SK-N-SH (cell line): ENCODE measurements at regions of chr13 and their contacts with region 1.

Region 1: GRCh38 chr13:108155185-108156106 is 59.9 kb downstream of the LIG4 start:
- DNase-seq: peak; percentile 55
- H3K4me3 ChIP-seq: peak overlapping the region in 1 of 2 experiments; percentile 48; a peak in 1 of 4 replicates
- H3K27ac ChIP-seq: no peak overlapping the region
- H3K4me1 ChIP-seq: no peaks in the 10 kb centered on the region
- H3K27me3 ChIP-seq: no peaks in the 10 kb centered on the region
- CTCF ChIP-seq: peak; percentile 95
- EP300 ChIP-seq: no peak
- RAD21 ChIP-seq: peak; percentile 87

Region 2: GRCh38 chr13:107205303-107206104 is 949.9 kb before region 1 on chr13:
- CTCF ChIA-PET with region 1: interaction called, 44 read pairs
- POLR2A ChIA-PET with region 1: no interaction called
- DNase-seq: peak; percentile 71
- H3K4me3 ChIP-seq: peak overlapping the region in 1 of 2 experiments; percentile 10; a peak in 1 of 4 replicates
- H3K27ac ChIP-seq: no peak overlapping the region
- H3K4me1 ChIP-seq: peaks cover 3 to 11% of the 10 kb centered on the region in 2 experiments; a peak in 3 of 4 replicates
- H3K27me3 ChIP-seq: no peaks in the 10 kb centered on the region
- CTCF ChIP-seq: peak; percentile 99
- EP300 ChIP-seq: no peak
- RAD21 ChIP-seq: peak; percentile 90

Region 3: DNA sequence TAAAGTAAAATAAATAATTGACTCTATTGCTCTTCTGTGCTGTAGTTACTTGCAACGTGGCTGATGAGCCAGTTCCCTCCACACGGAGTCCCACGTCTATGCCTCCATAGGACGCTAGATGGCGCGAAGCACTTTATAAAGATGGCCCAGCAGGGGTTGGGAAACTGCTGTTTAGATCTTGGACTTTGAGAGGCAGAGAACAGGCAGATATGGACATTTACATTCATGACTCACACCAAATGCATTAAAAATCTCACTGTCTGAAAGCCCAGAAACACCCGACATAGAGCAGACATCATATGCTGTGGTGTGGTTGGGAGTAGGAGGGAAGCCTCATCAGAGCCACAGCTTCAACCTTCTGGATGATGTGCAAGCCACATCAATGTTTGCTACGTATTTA is 944.4 kb before region 1 on chr13:
- CTCF ChIA-PET with region 1: interaction called, 44 read pairs
- POLR2A ChIA-PET with region 1: no interaction called
- DNase-seq: peak; percentile 70
- H3K4me3 ChIP-seq: peak overlapping the region in 1 of 2 experiments; percentile 11; a peak in 1 of 4 replicates
- H3K27ac ChIP-seq: no peak overlapping the region; a peak in 1 of 4 replicates
- H3K4me1 ChIP-seq: peaks cover 11 to 17% of the 10 kb centered on the region in 2 experiments; a peak in 3 of 4 replicates
- H3K27me3 ChIP-seq: no peaks in the 10 kb centered on the region
- CTCF ChIP-seq: peak; percentile 96
- EP300 ChIP-seq: 0 out of 4 replicates have a peak, but pooled peaks of 1 of the 2 experiments have one; percentile 21
- RAD21 ChIP-seq: peak; percentile 98

Region 4: DNA sequence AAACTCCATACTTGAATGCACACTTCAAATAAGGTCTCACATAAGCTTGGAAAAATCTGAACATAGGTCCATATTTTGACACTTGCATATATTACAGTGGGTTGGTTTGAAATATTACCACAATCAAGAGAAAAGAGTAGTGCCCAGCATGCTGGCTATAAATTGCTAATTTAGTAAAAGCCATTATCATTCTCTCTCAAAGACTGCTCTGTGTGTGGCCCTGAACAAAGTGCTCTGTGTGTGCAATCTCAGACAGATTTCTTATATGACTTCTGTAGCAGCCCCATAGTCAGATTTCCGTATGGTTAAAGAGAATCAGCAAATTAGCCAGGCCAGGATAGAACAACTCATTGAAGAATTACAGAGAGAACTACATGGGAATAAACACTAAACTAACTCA is 18.3 kb before region 1 on chr13:
- CTCF ChIA-PET with region 1: interaction called, 16 read pairs
- POLR2A ChIA-PET with region 1: no interaction called
- DNase-seq: no peak
- H3K4me3 ChIP-seq: no peak overlapping the region
- H3K27ac ChIP-seq: no peak overlapping the region
- H3K4me1 ChIP-seq: no peaks in the 10 kb centered on the region
- H3K27me3 ChIP-seq: peaks cover 1% of the 10 kb centered on the region; the same call in 1 of the 2 replicates
- CTCF ChIP-seq: no peak
- EP300 ChIP-seq: no peak
- RAD21 ChIP-seq: no peak

Region 5: DNA sequence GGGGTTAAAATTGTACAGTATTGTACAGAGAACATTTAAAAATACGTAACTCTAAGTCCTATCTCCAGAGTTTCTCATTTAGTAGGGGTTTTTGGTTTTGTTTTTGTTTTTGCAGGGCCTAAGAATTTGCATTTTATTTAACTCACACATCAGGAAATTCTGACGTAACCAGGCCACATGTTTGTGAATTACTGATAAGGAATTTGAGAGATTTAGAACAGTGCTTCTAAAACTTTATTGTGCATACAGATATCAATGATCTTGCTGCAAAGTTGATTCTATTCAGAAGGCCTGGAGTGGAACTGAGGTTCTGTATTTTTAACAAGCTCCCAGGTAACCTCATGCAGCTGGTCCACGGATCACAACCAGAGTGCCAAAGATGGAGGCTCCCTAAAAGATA is 10.6 kb after region 1 on chr13:
- CTCF ChIA-PET with region 1: interaction called, 48 read pairs
- POLR2A ChIA-PET with region 1: no interaction called
- DNase-seq: no peak
- H3K4me3 ChIP-seq: no peak overlapping the region
- H3K27ac ChIP-seq: no peak overlapping the region
- H3K4me1 ChIP-seq: no peaks in the 10 kb centered on the region
- H3K27me3 ChIP-seq: no peaks in the 10 kb centered on the region
- CTCF ChIP-seq: no peak
- EP300 ChIP-seq: no peak
- RAD21 ChIP-seq: no peak

Region 6: DNA sequence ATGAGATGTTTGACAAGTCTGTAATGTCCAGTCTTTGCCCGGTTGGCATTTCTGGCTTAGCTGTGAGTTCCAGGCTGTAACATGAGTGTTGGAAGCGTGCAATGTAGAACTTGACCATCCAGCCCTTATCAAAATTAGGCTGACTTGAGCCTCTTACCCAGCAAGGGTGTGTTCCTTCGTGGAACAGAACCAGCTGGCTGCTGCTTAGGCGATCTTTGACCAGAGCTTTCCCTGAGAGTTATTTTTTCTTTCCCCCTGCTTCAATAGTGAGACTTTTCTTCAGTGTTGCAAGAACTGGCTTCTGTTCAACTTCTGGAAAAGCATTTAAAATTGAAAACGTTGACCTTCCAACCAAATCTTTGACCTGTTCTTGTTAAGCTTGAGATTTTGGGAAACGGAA is 120.6 kb after region 1 on chr13:
- CTCF ChIA-PET with region 1: no interaction called
- POLR2A ChIA-PET with region 1: no interaction called
- DNase-seq: no peak
- H3K4me3 ChIP-seq: no peak overlapping the region
- H3K27ac ChIP-seq: no peak overlapping the region
- H3K4me1 ChIP-seq: no peaks in the 10 kb centered on the region
- H3K27me3 ChIP-seq: no peaks in the 10 kb centered on the region
- CTCF ChIP-seq: no peak
- EP300 ChIP-seq: no peak
- RAD21 ChIP-seq: no peak